ENCODE measurements at regions of chr15 and their contacts with region 1.

Region 1: GRCh38 chr15:90320061-90320884 is 31.8 kb upstream of the ZNF774 start:
- DNase-seq: peak; percentile 91
- H3K4me3 ChIP-seq: no peak overlapping the region
- H3K27ac ChIP-seq: no peak overlapping the region
- H3K4me1 ChIP-seq: peaks cover 3% of the 10 kb centered on the region
- H3K27me3 ChIP-seq: no peaks in the 10 kb centered on the region
- CTCF ChIP-seq: peak; percentile 97 to 98
- POLR2A ChIP-seq: no peak

Region 2: GRCh38 chr15:90291679-90292356 is 28.5 kb before region 1 on chr15:
- CTCF ChIA-PET with region 1: interaction called, 15 read pairs
- POLR2A ChIA-PET with region 1: no interaction called
- dilution Hi-C with region 1: no loop called
- intact Hi-C with region 1: no loop called
- DNase-seq: no peak
- H3K4me3 ChIP-seq: no peak overlapping the region
- H3K27ac ChIP-seq: no peak overlapping the region
- H3K4me1 ChIP-seq: no peaks in the 10 kb centered on the region
- H3K27me3 ChIP-seq: peaks cover 0 to 1% of the 10 kb centered on the region in 2 experiments
- CTCF ChIP-seq: no peak
- POLR2A ChIP-seq: no peak

Region 3: GRCh38 chr15:90306560-90306959 is 13.7 kb before region 1 on chr15:
- CTCF ChIA-PET with region 1: interaction called, 13 read pairs
- POLR2A ChIA-PET with region 1: no interaction called
- dilution Hi-C with region 1: no loop called
- intact Hi-C with region 1: no loop called
- DNase-seq: no peak
- H3K4me3 ChIP-seq: no peak overlapping the region
- H3K27ac ChIP-seq: no peak overlapping the region
- H3K4me1 ChIP-seq: no peaks in the 10 kb centered on the region
- H3K27me3 ChIP-seq: no peaks in the 10 kb centered on the region
- CTCF ChIP-seq: no peak
- POLR2A ChIP-seq: no peak

Region 4: DNA sequence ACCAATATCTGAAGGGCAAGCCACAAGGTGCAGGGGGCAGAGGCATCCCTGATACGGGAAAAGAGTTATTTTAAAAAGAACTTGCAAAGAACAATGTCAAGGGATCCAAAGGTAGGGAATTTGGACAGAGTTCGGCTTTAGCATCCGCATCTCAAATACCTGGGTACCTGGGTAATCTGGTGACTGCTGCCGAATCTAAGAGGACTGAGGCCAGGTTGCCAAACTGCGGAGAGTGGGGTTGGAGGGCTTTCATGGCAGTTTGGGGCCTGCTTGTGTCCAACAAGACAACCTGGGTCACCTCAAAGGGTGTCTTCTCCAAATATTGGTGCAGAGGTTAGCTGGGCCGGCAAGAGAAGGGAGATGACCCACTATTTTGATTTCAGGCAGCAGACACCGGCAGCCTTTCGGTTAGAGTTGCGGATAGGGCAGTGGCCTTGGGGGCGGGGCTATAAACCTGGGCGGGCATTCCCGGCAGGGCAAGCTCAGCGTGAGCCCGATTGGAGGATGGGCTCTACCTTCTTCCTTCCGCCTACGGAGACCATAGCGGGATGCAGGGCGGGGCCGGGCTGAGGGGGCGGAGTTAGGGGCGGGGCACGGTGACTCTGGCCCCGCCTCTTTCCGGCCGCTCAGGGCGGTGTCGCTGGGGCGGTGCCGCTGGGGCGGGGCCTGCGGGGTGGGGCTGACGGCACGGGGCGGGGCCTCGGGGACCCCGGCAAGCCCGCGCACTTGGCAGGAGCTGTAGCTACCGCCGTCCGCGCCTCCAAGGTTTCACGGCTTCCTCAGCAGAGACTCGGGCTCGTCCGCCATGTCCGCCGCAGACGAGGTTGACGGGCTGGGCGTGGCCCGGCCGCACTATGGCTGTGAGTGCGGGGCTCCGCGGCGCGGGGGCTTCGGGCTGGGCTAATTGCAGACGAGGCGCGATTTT is 67.5 kb after region 1 on chr15 and contains the start of gene IQGAP1:
- CTCF ChIA-PET with region 1: interaction called, 9 read pairs
- POLR2A ChIA-PET with region 1: no interaction called
- dilution Hi-C with region 1: no loop called
- intact Hi-C with region 1: loop called (anchors 1 kb)
- DNase-seq: peak; percentile 95
- H3K4me3 ChIP-seq: peak within 1 kb of the TSS; percentile 74 to 97 (median 95)
- H3K27ac ChIP-seq: peak within 1 kb of the TSS; percentile 88
- H3K4me1 ChIP-seq: peaks cover 30% of the 10 kb centered on the region
- H3K27me3 ChIP-seq: no peaks in the 10 kb centered on the region
- CTCF ChIP-seq: no peak
- POLR2A ChIP-seq: peak; percentile 91
- total RNA-seq, gene IQGAP1: 244 and 258 TPM in 2 replicates

Region 5: GRCh38 chr15:90451053-90451850 is 131.0 kb after region 1 on chr15:
- CTCF ChIA-PET with region 1: interaction called, 11 read pairs
- POLR2A ChIA-PET with region 1: no interaction called
- dilution Hi-C with region 1: no loop called
- intact Hi-C with region 1: no loop called
- DNase-seq: no peak
- H3K4me3 ChIP-seq: no peak overlapping the region
- H3K27ac ChIP-seq: no peak overlapping the region
- H3K4me1 ChIP-seq: no peaks in the 10 kb centered on the region
- H3K27me3 ChIP-seq: no peaks in the 10 kb centered on the region
- CTCF ChIP-seq: no peak
- POLR2A ChIP-seq: no peak

Region 6: DNA sequence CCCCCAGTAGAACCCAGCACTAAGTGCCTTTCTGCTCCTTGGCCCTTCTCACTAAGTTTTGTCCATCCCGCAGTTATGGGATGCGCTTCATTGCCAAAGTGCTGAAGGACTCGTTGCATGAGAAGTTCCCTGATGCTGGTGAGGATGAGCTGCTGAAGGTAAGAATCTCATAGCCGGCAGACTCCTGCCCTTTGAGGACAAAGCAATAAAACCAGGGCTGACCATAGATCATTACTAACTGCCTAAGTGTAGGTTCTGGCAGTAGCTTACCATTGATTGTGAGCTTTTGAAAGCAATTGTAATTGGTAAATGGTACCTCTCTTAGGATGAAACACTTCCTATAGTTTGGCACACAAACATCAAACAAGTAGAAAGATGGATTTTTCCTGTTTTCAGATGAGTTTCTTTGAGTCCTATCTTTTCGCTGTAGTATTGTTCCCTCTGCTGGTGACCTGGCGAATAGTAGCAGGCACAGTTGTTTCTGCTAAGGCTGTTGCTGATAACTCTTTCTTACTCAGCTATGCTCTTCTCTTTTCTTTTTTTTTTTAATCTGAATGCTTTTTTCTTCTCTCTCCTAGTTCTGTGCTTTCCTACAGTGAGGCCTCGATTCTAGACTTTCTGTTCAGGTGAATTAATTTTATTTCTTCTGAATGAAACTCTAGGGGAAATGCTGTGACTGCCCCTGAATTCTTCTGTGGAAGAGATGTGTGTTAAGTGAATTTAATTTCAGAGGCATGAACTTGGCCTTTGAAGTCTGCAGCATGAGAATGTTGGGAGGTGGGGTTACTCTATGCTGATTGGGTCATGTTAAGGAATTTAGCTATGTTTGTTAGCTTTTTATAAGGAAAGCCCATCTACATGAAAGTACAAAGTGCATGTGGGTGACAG is 162.1 kb after region 1 on chr15:
- CTCF ChIA-PET with region 1: interaction called, 148 read pairs
- POLR2A ChIA-PET with region 1: interaction called, 7 read pairs
- dilution Hi-C with region 1: no loop called
- intact Hi-C with region 1: loop called (anchors 1 kb)
- DNase-seq: peak; percentile 78
- H3K4me3 ChIP-seq: no peak overlapping the region
- H3K27ac ChIP-seq: no peak overlapping the region
- H3K4me1 ChIP-seq: peaks cover 11% of the 10 kb centered on the region
- H3K27me3 ChIP-seq: no peaks in the 10 kb centered on the region
- CTCF ChIP-seq: peak; percentile 47 to 67
- POLR2A ChIP-seq: no peak

Region 7: DNA sequence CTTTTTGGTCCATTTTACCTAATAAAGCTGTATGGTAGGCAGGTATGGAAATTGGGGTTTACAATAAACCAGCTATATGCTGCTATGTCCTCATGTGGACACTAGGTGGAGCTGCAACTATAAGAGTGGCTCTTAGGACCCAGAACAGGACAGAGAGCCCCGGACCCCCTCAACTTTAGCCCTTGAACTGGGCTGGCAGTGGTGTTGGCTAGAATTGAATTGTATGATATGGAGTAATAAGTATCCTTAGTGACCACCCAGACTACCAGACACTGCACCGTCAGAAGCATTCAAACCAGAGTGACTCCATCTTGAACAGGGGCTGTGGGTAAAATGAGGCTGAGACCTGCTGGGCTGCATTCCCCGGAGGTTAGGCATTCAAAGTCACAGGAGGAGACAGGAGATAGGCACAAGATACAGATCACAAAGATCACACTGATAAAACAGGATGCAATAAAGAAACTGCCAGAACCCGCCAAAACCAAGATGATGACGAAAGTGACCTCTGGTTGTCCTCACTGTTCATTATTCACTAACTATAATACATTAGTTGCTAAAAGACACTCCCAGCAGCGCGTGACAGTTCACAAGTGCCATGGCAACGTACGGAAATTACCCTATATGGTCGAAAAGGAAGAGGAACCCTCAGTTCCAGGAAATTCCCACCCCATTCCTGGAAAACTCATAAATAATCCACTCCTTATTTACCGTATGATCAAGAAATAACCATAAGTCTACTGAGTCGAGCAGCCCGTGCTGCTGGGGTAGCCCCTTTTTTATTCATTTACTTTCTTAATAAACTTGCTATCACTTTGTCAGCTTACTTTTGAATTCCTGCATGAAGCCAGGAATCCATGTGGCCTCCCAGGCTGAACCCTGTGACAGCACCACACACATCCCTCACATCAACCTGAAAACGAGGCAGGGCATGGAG is 328.1 kb after region 1 on chr15:
- CTCF ChIA-PET with region 1: interaction called, 10 read pairs
- POLR2A ChIA-PET with region 1: no interaction called
- dilution Hi-C with region 1: no loop called
- intact Hi-C with region 1: no loop called
- DNase-seq: peak; percentile 88
- H3K4me3 ChIP-seq: no peak overlapping the region
- H3K27ac ChIP-seq: peak overlapping the region; percentile 97
- H3K4me1 ChIP-seq: peaks cover 30% of the 10 kb centered on the region
- H3K27me3 ChIP-seq: no peaks in the 10 kb centered on the region
- CTCF ChIP-seq: peak; percentile 70 to 82
- POLR2A ChIP-seq: peak; percentile 50

Measured in endothelial cell of umbilical vein (primary cell).